Endothelial cell of umbilical vein (primary cell): ENCODE measurements at regions of chr10 and their contacts with region 1.

Region 1: DNA sequence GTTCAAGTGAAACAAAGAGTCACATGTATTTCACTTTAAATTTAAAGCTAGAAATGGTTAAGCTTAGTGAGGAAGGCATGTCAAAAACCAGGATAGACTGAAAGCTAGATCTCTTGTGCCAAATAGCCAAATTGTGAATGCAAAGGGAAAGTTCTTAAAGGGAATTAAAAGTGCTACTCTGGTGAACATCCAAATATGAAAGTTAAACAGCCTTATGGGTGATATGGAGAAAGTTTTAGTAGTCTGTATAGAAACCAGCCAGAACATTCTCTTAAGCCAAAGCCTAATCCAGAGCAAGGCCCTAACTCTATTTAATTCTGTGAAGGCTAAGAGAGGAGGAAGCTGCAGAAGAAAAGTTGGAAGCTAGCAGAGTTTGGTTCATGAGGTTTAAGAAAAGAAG is 47.1 kb downstream of the MXI1 start:
- DNase-seq: no peak
- H3K4me3 ChIP-seq: no peak overlapping the region
- H3K27ac ChIP-seq: no peak overlapping the region
- H3K4me1 ChIP-seq: no peaks in the 10 kb centered on the region
- H3K27me3 ChIP-seq: no peaks in the 10 kb centered on the region
- CTCF ChIP-seq: no peak
- POLR2A ChIP-seq: no peak

Region 2: GRCh38 chr10:110241407-110241806 is 13.1 kb before region 1 on chr10:
- CTCF ChIA-PET with region 1: interaction called, 11 read pairs
- POLR2A ChIA-PET with region 1: no interaction called
- dilution Hi-C with region 1: no loop called
- intact Hi-C with region 1: no loop called
- DNase-seq: no peak
- H3K4me3 ChIP-seq: no peak overlapping the region
- H3K27ac ChIP-seq: no peak overlapping the region
- H3K4me1 ChIP-seq: no peaks in the 10 kb centered on the region
- H3K27me3 ChIP-seq: no peaks in the 10 kb centered on the region
- CTCF ChIP-seq: no peak
- POLR2A ChIP-seq: no peak